ENCODE measurements at regions of chr4 and their contacts with region 1.

Region 1: GRCh38 chr4:91092398-91093090 is 965.4 kb downstream of the CCSER1 start:
- DNase-seq: peak; percentile 12
- H3K4me3 Mint-ChIP-seq: no peak overlapping the region
- H3K27ac Mint-ChIP-seq: no peak overlapping the region
- H3K4me1 Mint-ChIP-seq: no peaks in the 10 kb centered on the region
- H3K27me3 Mint-ChIP-seq: no peaks in the 10 kb centered on the region
- CTCF ChIP-seq: no peak

Region 2: DNA sequence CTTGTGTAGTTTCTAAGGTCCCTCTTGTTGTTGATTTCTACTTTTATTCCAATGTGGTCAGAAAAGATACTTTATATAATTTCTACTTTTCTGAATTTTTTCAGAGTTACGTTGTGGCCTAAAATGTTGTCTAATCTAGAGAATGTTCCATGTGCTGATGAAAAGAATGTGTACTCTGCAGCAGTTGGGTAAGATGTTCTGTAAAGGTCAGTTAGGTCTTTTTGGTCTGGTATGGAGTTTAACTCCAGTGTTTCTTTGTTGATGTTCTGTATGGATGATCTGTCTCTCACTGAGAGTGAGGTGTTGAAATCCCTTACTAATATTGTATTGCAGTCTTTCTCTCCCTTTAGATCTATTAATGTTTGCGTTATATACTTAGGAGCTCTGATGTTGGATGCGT is 1748.0 kb before region 1 on chr4:
- CTCF ChIA-PET with region 1: no interaction called
- POLR2A ChIA-PET with region 1: no interaction called
- intact Hi-C with region 1: no loop called
- DNase-seq: no peak
- H3K4me3 Mint-ChIP-seq: no peak overlapping the region
- H3K27ac Mint-ChIP-seq: no peak overlapping the region
- H3K4me1 Mint-ChIP-seq: no peaks in the 10 kb centered on the region
- H3K27me3 Mint-ChIP-seq: no peaks in the 10 kb centered on the region
- CTCF ChIP-seq: no peak

Region 3: DNA sequence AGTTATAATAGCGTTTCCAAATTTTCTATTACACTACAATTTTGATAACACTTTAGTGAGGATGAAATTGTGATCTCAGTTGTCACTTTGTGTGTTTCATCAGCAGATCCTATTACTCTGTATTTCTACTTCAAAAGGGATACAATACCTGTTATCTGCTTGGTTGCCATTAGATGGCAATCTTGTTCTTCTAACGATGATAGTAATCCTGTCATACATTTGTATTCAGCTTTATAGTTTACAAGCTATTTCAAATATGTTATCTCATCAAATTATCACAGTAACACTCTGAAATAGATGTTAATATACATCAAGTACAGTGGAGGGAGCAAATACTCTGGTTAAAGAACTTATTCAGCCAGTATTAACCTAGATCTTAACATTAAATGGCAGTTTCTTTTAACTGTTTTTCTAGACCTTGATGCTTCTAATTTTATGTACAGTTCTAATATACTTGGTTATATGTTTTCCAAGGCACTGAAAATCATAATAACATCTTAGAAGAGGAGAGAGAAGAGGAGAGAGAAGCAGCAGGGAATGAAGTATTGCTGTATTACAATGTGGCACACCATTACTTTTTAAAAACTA is 673.3 kb before region 1 on chr4:
- CTCF ChIA-PET with region 1: interaction called, 22 read pairs
- POLR2A ChIA-PET with region 1: no interaction called
- intact Hi-C with region 1: no loop called
- DNase-seq: peak; percentile 61
- H3K4me3 Mint-ChIP-seq: no peak overlapping the region
- H3K27ac Mint-ChIP-seq: no peak overlapping the region
- H3K4me1 Mint-ChIP-seq: no peaks in the 10 kb centered on the region
- H3K27me3 Mint-ChIP-seq: no peaks in the 10 kb centered on the region
- CTCF ChIP-seq: peak; percentile 56

Region 4: GRCh38 chr4:91924625-91925024 is 832.1 kb after region 1 on chr4:
- CTCF ChIA-PET with region 1: no interaction called
- POLR2A ChIA-PET with region 1: no interaction called
- intact Hi-C with region 1: no loop called
- DNase-seq: no peak
- H3K4me3 Mint-ChIP-seq: no peak overlapping the region
- H3K27ac Mint-ChIP-seq: no peak overlapping the region
- H3K4me1 Mint-ChIP-seq: no peaks in the 10 kb centered on the region
- H3K27me3 Mint-ChIP-seq: no peaks in the 10 kb centered on the region
- CTCF ChIP-seq: no peak